Heart left ventricle (tissue), 16 donors: ENCODE measurements at regions of chr18 and their contacts with region 1.

Region 1: GRCh38 chr18:36129300-36130038 is at the starts of genes ELP2 and SLC39A6:
- DNase-seq: peak; percentile 96 to 98 (median 97)
- ATAC-seq: peak; percentile 96 to 99 (median 98)
- H3K4me3 ChIP-seq: peak within 1 kb of the TSS; percentile 69 to 100 (median 90)
- H3K27ac ChIP-seq: peak within 1 kb of the TSS; percentile 96 to 100 (median 99)
- H3K4me1 ChIP-seq: peaks cover 0 to 37% (median 30%) of the 10 kb centered on the region in 12 donors
- H3K27me3 ChIP-seq: no peaks in the 10 kb centered on the region
- CTCF ChIP-seq: peak in 3 of 12 donors; percentile 7 to 13 (median 9)
- POLR2A ChIP-seq: peak in 1 of 2 donors; percentile 29
- total RNA-seq, gene ELP2: 26.2 to 60.7 (median 46.8) TPM
- total RNA-seq, gene SLC39A6: 11.1 to 22.3 (median 15.2) TPM

Region 2: DNA sequence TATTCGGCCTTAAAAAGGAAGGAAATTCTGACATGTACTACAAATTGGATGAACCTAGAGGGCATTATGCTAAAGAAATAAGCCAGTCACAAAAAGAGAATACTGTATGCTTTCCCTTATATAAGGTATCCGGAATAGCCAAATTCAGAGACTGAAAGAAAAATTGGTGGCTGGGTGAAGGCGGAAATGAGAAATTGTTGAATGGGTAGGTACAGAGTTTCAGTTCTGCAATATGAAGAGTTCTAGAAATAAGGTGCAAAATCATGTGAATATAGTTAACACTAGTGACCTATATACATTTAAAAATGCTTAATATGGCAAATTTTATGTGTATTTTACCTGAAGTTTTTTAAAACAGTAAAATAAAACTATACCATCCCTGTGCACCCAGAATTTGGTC is 113.8 kb before region 1 on chr18:
- intact Hi-C with region 1: loop called in 2 of 10 experiments (anchors 5 to 10 kb)
- DNase-seq: no peak
- ATAC-seq: no peak
- H3K4me3 ChIP-seq: no peak overlapping the region
- H3K27ac ChIP-seq: no peak overlapping the region
- H3K4me1 ChIP-seq: peaks cover 0 to 8% (median 0%) of the 10 kb centered on the region in 12 donors
- H3K27me3 ChIP-seq: no peaks in the 10 kb centered on the region
- CTCF ChIP-seq: no peak
- POLR2A ChIP-seq: no peak

Region 3: GRCh38 chr18:36025025-36025424 is 104.4 kb before region 1 on chr18:
- intact Hi-C with region 1: loop called in 1 of 10 experiments (anchors 10 kb)
- DNase-seq: no peak
- ATAC-seq: no peak
- H3K4me3 ChIP-seq: no peak overlapping the region
- H3K27ac ChIP-seq: no peak overlapping the region
- H3K4me1 ChIP-seq: peaks cover 0 to 8% (median 0%) of the 10 kb centered on the region in 12 donors
- H3K27me3 ChIP-seq: no peaks in the 10 kb centered on the region
- CTCF ChIP-seq: no peak
- POLR2A ChIP-seq: no peak

Region 4: DNA sequence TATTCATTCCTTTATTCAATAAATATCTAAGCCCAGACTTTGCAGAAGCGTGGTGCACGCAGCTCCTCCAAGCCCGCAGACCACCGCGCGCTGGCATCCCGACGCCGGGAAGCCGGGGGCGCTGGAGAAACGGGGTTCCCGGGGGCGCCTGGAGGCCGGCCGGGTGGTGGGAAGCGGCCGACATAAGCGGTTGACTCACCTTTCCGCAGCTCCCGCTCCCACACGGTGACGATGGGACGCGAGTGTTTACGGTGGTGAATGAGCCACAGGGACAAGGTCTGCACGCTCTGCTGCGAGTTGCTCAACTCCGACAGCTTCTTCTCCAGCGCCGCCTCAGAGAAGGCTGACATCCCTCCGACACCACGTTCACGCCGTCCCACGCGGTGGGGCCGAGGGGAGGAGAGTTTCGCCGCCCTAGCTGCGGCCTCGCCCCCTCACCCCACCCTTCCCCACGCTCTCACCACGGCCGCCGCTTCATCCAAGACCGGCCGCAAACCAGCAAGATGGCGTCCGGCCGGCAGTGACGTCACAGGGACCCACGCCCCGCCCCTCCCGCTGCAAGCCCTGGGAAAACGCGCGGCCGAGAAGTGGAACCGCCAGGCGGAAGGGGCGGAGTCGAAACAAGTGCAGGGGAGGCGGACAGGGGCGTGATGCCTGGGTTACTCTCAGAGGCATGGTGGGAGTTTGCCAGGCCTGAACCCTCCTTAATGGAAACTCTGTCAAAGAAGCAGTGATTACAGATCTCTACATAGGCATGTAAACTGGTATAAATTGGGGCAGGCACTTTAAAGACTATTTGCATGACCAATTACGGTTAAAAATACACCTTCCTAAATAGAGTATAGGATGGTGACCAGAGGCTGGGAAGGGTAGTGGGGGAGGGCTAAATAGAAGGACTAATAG is 62.2 kb before region 1 on chr18 and contains the start of gene RPRD1A:
- intact Hi-C with region 1: loop called in 7 of 10 experiments (anchors 2 to 5 kb)
- DNase-seq: peak; percentile 97 to 99 (median 98)
- ATAC-seq: peak; percentile 97 to 99 (median 97)
- H3K4me3 ChIP-seq: peak within 1 kb of the TSS; percentile 71 to 99 (median 82)
- H3K27ac ChIP-seq: peak within 1 kb of the TSS; percentile 59 to 94 (median 90)
- H3K4me1 ChIP-seq: peaks cover 3 to 25% (median 14%) of the 10 kb centered on the region in 12 donors
- H3K27me3 ChIP-seq: peaks cover 0 to 4% (median 0%) of the 10 kb centered on the region in 9 donors
- CTCF ChIP-seq: peak in 2 of 12 donors; percentile 7 to 10
- POLR2A ChIP-seq: peak in 1 of 2 donors; percentile 54
- total RNA-seq, gene RPRD1A: 38.5 to 59.8 (median 45.3) TPM

Region 5: DNA sequence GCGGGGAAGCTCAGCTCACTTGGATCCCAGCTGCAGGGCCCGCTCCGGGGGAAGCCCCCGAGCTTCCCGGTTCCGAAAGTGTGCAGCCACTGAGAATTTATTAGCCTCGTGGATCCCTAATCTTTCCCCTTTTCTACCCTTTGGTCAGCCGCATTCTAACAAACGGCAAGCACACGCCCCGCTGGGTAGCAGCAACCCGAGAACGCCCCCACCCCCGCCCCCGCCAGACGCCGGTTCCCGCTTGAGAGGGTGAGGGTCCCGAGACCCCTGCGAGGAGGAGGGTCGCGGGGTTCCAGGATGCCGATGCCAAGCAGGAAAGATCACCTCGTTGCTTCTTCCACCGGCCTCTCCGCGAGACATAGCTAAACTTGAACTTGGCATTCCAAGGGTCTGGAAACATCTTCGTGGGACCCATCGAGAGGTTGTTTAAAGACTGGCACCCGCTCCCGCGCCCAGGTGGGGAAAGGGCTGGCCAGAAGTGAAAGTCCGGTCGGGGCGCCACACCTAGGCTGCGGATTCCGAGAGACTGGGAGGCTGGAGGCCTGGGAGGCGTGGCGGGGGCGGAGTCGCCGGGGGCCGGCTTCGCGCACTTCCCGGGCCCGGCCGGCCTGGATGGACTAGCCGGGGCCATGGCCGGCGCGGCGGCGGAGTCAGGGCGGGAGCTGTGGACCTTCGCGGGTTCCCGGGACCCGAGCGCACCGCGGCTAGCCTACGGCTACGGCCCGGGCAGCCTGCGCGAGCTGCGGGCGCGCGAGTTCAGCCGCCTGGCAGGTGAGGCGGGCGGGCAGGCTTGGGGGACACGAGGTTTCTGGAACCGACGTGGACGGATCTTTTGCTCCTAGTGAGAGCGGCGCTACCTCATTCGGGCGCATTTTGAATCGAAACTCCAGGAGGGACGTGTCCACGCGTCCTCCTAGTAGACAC is 57.7 kb after region 1 on chr18 and contains the start of gene MOCOS:
- intact Hi-C with region 1: loop called in 1 of 10 experiments (anchors 10 kb)
- DNase-seq: peak; percentile 79 to 87 (median 81)
- ATAC-seq: peak; percentile 75 to 97 (median 92)
- H3K4me3 ChIP-seq: peak within 1 kb of the TSS; percentile 41 to 96 (median 68)
- H3K27ac ChIP-seq: peak within 1 kb of the TSS in 3 of 12 donors; percentile 36 to 51 (median 46)
- H3K4me1 ChIP-seq: peaks cover 0 to 24% (median 4%) of the 10 kb centered on the region in 12 donors
- H3K27me3 ChIP-seq: peaks cover 0 to 12% (median 0%) of the 10 kb centered on the region in 9 donors
- CTCF ChIP-seq: no peak
- POLR2A ChIP-seq: no peak
- total RNA-seq, gene MOCOS: 0.07 to 1.0 (median 0.25) TPM

Region 6: GRCh38 chr18:36247036-36247435 is 117.6 kb after region 1 on chr18:
- intact Hi-C with region 1: no loop called
- DNase-seq: no peak
- ATAC-seq: no peak
- H3K4me3 ChIP-seq: no peak overlapping the region
- H3K27ac ChIP-seq: no peak overlapping the region
- H3K4me1 ChIP-seq: no peaks in the 10 kb centered on the region
- H3K27me3 ChIP-seq: no peaks in the 10 kb centered on the region
- CTCF ChIP-seq: no peak
- POLR2A ChIP-seq: no peak

Region 7: GRCh38 chr18:36284671-36285295 is 155.3 kb after region 1 on chr18:
- intact Hi-C with region 1: no loop called
- DNase-seq: peak in 1 of 5 donors; percentile 38
- ATAC-seq: peak in 2 of 4 donors; percentile 48 to 64
- H3K4me3 ChIP-seq: no peak overlapping the region
- H3K27ac ChIP-seq: no peak overlapping the region
- H3K4me1 ChIP-seq: no peaks in the 10 kb centered on the region
- H3K27me3 ChIP-seq: peaks cover 0 to 13% (median 0%) of the 10 kb centered on the region in 9 donors
- CTCF ChIP-seq: peak; percentile 82 to 96 (median 91)
- POLR2A ChIP-seq: no peak